ENCODE measurements at regions of chr20 and their contacts with region 1.

Region 1: DNA sequence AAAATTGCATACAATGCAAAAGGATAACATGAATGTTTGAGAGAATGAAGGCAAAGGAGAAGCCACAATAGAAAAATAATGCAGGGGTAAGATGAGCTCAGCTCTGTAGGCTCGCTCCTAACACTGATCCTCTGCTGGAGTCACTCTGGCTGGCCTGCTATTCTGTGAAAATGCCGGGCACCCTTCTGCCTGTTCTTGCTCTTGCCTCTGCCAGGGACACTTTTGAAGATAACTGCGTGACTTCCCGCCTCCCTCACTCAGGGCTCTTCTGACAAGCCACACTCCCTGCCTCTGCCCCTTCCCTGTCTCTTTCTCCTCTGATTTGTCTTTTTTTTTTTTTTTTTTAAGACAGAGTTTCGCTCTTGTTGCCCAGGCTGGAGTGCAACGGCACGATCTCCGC is 35.3 kb upstream of the MYBL2 start:
- DNase-seq: no peak
- ATAC-seq: no peak
- H3K4me3 ChIP-seq: no peak overlapping the region
- H3K27ac ChIP-seq: no peak overlapping the region
- H3K4me1 ChIP-seq: no peaks in the 10 kb centered on the region
- H3K27me3 ChIP-seq: no peaks in the 10 kb centered on the region
- CTCF ChIP-seq: no peak
- EP300 ChIP-seq: no peak
- POLR2A ChIP-seq: no peak
- RAD21 ChIP-seq: no peak

Region 2: GRCh38 chr20:43331906-43332305 is 299.7 kb before region 1 on chr20:
- CTCF ChIA-PET with region 1: no interaction called
- POLR2A ChIA-PET with region 1: no interaction called
- in situ Hi-C with region 1: loop called (anchors 10 kb)
- intact Hi-C with region 1: no loop called
- DNase-seq: no peak
- ATAC-seq: no peak
- H3K4me3 ChIP-seq: no peak overlapping the region
- H3K27ac ChIP-seq: no peak overlapping the region
- H3K4me1 ChIP-seq: no peaks in the 10 kb centered on the region; a peak in 1 of 5 replicates
- H3K27me3 ChIP-seq: no peaks in the 10 kb centered on the region; a peak in 1 of 5 replicates
- CTCF ChIP-seq: no peak
- EP300 ChIP-seq: no peak
- POLR2A ChIP-seq: no peak
- RAD21 ChIP-seq: no peak